Cardiac septum (tissue), 1 donor: ENCODE measurements at regions of chr1 and their contacts with region 1.

Region 1: GRCh38 chr1:93552741-93553455 is 105.0 kb downstream of the FNBP1L start:
- DNase-seq: no peak

Region 2: DNA sequence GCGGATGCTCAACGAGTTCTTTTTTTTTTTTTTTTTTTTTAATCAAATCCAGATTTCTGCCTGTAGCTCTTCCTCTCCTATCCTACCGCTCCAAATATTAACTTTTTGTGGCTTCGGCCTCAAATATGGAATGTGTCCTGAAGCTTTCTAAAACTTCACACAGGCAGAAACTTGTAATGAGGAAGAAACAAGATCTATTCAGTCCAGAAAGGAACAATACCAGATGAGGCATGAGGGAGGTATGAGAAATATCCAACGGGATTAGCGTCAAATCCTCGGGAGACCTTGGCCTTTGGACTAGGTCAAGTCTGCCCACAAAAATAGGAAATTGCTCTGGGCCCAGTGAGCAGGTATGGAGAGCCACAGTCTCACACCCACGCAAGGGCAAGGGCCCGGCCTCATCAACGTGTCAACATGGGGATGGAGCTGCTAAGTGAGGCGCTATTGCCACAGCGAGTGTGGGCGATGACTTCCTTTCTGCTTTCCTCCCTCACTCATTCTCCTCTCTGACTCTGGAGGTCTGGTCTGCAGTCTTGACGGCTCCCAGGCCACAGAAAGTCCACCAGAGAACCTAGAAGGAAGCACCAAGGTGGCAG is 62.2 kb after region 1 on chr1:
- intact Hi-C with region 1: loop called (anchors 5 kb)
- DNase-seq: no peak

Region 3: GRCh38 chr1:93672069-93672468 is 119.2 kb after region 1 on chr1:
- intact Hi-C with region 1: no loop called
- DNase-seq: peak; percentile 83